ENCODE measurements at regions of chr14 and their contacts with region 1.

Region 1: DNA sequence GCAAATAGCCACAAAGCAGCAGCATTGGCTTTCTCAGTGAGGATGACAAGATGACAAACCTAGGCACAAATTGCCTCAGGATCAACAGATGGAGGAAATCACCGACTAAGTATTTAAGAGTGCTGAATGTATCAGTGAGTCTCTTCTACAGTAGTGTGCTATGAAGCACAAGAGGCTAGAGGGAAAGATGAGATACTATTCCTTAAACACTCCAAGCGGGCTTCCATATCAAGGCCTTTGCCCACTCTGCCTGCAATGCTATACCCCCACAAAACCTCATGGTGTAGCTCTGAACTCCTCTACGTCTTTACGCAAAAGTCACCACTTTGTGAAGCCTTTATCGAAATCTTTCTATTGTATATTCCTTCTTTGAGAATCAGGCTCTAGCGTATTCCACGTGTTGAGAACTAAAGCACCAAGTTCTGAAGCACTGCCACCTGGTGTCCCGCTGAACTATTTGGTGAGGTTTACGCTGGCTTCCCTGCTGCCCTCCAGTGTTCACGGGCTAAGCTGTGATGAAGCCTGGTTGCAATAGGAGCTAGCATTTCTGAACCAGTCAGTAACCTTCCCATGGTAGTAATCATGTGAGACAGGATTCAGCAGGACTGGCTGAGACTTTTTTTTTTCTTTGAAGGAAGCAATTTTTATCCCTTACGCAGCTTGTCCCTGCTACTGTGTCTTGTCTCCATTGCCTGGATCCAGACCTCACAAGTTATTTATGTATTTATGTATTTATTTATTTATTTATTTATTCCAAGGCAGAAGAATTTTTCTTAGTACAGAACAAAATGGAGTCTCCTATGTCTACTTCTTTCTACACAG is 426.5 kb upstream of the OR4E1 start:
- DNase-seq: peak; percentile 72
- H3K4me3 Mint-ChIP-seq: no peak overlapping the region
- H3K27ac Mint-ChIP-seq: no peak overlapping the region
- H3K4me1 Mint-ChIP-seq: peaks cover 41% of the 10 kb centered on the region
- H3K27me3 Mint-ChIP-seq: no peaks in the 10 kb centered on the region

Region 2: GRCh38 chr14:22084393-22085281 is 15.5 kb before region 1 on chr14:
- CTCF ChIA-PET with region 1: interaction called, 41 read pairs
- POLR2A ChIA-PET with region 1: no interaction called
- intact Hi-C with region 1: loop called (anchors 1 kb)
- DNase-seq: no peak
- H3K4me3 Mint-ChIP-seq: peak overlapping the region; percentile 56
- H3K27ac Mint-ChIP-seq: peak overlapping the region; percentile 72
- H3K4me1 Mint-ChIP-seq: peaks cover 22% of the 10 kb centered on the region
- H3K27me3 Mint-ChIP-seq: no peaks in the 10 kb centered on the region

Measured in activated CD4-positive, alpha-beta memory T cell treated with anti-CD3 and anti-CD28 coated beads for 36 hours (primary cell).